Activated B cell treated with CpG ODN at 0.5 μM for 24 hours (primary cell): ENCODE measurements at regions of chrX and their contacts with region 1.

Region 1: DNA sequence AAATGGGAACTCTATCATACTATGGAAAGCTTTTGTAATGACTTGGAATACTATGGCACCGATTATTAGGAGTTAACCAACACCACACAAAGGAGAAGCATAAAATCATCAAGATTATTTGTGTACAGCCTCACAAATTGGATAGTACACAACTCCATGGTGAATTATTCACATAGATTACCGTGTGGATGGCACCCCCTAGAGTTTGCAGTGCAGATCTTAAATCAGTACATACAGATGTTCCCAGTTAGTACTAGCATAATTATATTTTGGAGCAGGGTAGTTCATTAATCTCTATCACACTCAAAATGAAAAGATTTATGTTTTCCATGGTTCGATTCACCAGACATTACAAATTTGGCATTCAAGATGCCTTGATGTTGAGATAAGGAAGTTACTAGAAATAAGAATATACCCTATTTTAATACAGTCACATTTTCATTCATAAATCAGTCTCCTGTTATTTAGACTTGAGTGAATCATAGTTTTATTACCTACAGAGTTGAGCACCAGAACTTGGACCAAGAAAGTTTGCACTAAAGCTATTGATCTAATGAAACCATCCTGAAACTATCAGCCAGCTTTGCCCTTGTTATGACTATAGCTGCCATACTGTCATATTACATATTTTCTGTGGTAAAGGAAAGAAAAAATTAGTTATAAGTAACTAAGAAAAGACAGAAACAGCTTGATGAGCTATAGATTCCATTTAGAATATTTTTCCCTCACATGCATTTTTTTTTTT is 531.8 kb downstream of the GLUD2 start:
- DNase-seq: no peak
- ATAC-seq: no peak
- H3K4me3 Mint-ChIP-seq: no peak overlapping the region
- H3K27ac Mint-ChIP-seq: no peak overlapping the region
- H3K4me1 Mint-ChIP-seq: no peaks in the 10 kb centered on the region
- H3K27me3 Mint-ChIP-seq: no peaks in the 10 kb centered on the region
- CTCF ChIP-seq: no peak

Region 2: GRCh38 chrX:120499301-120500072 is 1079.7 kb before region 1 on chrX:
- CTCF ChIA-PET with region 1: no interaction called
- POLR2A ChIA-PET with region 1: no interaction called
- intact Hi-C with region 1: loop called (anchors 10 kb)
- DNase-seq: no peak
- ATAC-seq: no peak
- H3K4me3 Mint-ChIP-seq: no peak overlapping the region
- H3K27ac Mint-ChIP-seq: no peak overlapping the region
- H3K4me1 Mint-ChIP-seq: peaks cover 3% of the 10 kb centered on the region
- H3K27me3 Mint-ChIP-seq: no peaks in the 10 kb centered on the region
- CTCF ChIP-seq: no peak

Region 3: GRCh38 chrX:120790118-120790517 is 789.1 kb before region 1 on chrX:
- CTCF ChIA-PET with region 1: no interaction called
- POLR2A ChIA-PET with region 1: no interaction called
- intact Hi-C with region 1: loop called (anchors 1 kb)
- DNase-seq: no peak
- ATAC-seq: no peak
- H3K4me3 Mint-ChIP-seq: no peak overlapping the region
- H3K27ac Mint-ChIP-seq: no peak overlapping the region
- H3K4me1 Mint-ChIP-seq: no peaks in the 10 kb centered on the region
- H3K27me3 Mint-ChIP-seq: no peaks in the 10 kb centered on the region
- CTCF ChIP-seq: no peak

Region 4: DNA sequence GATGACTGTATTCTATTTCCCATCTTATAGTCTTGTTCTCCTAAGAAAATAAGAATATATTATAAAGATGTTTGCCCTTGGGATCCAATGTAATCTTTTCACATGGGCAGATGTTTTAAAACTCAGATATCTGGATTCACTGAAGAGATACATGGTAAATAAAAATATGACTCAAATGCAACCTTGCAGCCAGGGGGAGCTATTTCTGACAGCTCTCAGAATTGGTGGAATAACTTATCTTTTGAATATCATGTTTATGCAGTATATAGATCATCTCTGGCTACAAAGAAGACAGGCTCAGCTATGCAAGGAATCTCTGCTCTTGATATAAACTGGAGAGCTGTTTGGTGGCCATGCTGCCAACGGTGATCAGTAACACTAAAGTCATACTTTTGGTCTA is 257.0 kb before region 1 on chrX:
- CTCF ChIA-PET with region 1: no interaction called
- POLR2A ChIA-PET with region 1: no interaction called
- intact Hi-C with region 1: loop called (anchors 5 kb)
- DNase-seq: no peak
- ATAC-seq: no peak
- H3K4me3 Mint-ChIP-seq: no peak overlapping the region
- H3K27ac Mint-ChIP-seq: no peak overlapping the region
- H3K4me1 Mint-ChIP-seq: no peaks in the 10 kb centered on the region
- H3K27me3 Mint-ChIP-seq: no peaks in the 10 kb centered on the region
- CTCF ChIP-seq: no peak

Region 5: DNA sequence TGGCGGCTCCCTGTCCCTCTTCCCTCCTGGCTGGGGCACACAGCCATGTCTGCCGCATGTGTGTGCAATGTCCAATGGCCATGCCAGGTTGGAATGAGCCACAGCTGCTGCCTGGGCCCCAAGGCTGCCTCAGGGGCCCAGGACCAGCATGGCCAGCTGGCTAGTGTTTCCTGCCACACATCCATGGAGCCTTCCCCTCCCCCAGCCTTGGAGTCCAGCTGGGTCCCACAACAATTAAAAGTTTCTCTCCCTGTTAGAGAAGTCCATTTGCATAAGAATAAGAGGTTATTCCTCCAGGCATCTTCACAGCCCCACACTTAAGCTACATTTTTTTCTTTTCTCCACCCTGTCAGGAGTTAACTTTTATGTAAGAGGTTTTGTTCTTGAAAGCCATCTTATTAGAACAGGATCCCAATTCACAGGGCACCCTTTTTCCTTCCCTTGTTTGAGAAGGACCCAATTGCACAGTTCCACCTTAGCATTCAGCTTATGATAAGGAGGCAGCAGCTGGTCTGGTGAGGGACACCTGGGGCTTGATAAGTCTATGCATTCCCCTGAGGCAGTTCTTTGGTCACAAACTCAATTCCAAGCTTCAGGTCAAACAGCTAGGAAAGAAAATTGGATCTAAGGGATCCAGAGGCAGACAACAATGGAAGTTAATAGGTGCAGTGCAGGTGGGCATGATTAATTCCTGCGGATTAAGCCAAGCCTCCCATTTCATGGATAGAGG is 641.6 kb after region 1 on chrX:
- CTCF ChIA-PET with region 1: no interaction called
- POLR2A ChIA-PET with region 1: no interaction called
- intact Hi-C with region 1: no loop called
- DNase-seq: no peak
- ATAC-seq: no peak
- H3K4me3 Mint-ChIP-seq: no peak overlapping the region
- H3K27ac Mint-ChIP-seq: no peak overlapping the region
- H3K4me1 Mint-ChIP-seq: no peaks in the 10 kb centered on the region
- H3K27me3 Mint-ChIP-seq: no peaks in the 10 kb centered on the region
- CTCF ChIP-seq: no peak